Astrocyte of the cerebellum (primary cell): ENCODE measurements at regions of chr1 and their contacts with region 1.

Region 1: GRCh38 chr1:109404838-109405237 is 7.1 kb upstream of the SORT1 start:
- DNase-seq: no peak
- H3K4me3 ChIP-seq: no peak overlapping the region
- CTCF ChIP-seq: no peak

Region 2: DNA sequence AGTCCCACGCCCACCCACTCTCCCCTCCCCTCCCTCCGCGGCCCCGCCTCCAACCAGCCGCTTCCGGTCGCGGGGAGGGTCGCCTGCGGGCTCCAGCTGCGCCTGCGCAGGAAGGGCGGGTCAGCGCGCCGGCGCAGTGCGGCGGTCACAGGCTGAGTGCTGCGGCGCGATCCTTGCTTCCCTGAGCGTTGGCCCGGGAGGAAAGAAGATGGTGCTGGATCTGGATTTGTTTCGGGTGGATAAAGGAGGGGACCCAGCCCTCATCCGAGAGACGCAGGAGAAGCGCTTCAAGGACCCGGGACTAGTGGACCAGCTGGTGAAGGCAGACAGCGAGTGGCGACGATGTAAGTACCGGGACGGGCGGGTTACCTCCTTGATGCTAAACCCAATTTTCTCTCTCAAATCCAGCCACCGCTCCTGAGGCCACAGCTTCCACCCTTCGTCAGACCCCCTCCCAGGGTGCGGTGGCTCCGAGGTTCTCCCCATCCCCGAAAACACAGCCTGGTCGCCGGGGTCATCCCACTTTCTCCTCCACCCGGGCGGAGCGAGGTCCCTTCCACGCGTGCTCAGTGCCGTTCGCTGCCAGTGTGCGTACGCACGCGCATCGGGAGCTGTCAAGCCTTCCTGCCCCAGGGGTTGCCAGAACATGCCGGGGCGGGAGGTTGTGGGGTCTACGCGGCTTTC is 190.9 kb before region 1 on chr1 and contains the start of gene SARS1:
- in situ Hi-C with region 1: loop called (anchors 10 kb)
- DNase-seq: peak; percentile 45
- H3K4me3 ChIP-seq: peak within 1 kb of the TSS; percentile 88
- CTCF ChIP-seq: no peak

Region 3: GRCh38 chr1:109277434-109278204 is 127.2 kb before region 1 on chr1:
- in situ Hi-C with region 1: loop called (anchors 10 kb)
- DNase-seq: no peak
- H3K4me3 ChIP-seq: no peak overlapping the region
- CTCF ChIP-seq: peak; percentile 92